Mammary epithelial cell (primary cell): ENCODE measurements at regions of chr14 and their contacts with region 1.

Region 1: GRCh38 chr14:68039593-68039992 is 220.0 kb downstream of the RAD51B start:
- DNase-seq: peak; percentile 50
- H3K4me3 ChIP-seq: no peak overlapping the region
- H3K27ac ChIP-seq: no peak overlapping the region
- H3K4me1 ChIP-seq: peaks cover 9% of the 10 kb centered on the region
- H3K27me3 ChIP-seq: no peaks in the 10 kb centered on the region
- CTCF ChIP-seq: no peak

Region 2: DNA sequence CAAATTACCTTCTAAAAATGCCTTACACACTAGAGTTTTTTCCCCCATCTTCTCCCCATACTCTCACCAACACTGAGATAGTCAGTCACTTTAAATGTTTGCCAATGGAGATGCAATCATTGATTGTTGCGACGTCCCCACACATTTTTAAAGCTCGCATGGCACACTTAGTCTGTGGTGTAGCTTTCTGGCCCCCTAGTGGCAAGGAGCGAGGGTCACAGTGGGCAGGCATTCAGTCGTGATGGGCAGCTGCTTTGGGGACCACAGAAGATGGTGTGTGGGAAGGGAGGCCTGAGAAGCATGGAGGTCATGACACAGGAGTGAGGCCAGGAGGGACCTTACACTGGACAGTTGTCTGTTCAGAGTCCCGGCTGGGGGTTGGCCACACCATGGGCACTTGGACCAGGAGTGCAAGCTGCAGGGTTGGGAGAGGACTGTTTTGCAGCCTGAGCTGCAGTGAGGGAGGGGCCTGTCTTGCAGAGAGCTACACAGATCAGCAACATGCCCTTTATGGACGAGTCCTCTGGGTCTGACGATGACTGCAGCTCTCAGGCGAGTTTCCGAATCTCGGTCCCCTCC is 468.2 kb before region 1 on chr14:
- CTCF ChIA-PET with region 1: no interaction called
- dilution Hi-C with region 1: no loop called
- in situ Hi-C with region 1: no loop called
- intact Hi-C with region 1: no loop called
- DNase-seq: peak; percentile 37
- H3K4me3 ChIP-seq: no peak overlapping the region
- H3K27ac ChIP-seq: no peak overlapping the region
- H3K4me1 ChIP-seq: no peaks in the 10 kb centered on the region
- H3K27me3 ChIP-seq: no peaks in the 10 kb centered on the region
- CTCF ChIP-seq: peak; percentile 94 to 97

Region 3: DNA sequence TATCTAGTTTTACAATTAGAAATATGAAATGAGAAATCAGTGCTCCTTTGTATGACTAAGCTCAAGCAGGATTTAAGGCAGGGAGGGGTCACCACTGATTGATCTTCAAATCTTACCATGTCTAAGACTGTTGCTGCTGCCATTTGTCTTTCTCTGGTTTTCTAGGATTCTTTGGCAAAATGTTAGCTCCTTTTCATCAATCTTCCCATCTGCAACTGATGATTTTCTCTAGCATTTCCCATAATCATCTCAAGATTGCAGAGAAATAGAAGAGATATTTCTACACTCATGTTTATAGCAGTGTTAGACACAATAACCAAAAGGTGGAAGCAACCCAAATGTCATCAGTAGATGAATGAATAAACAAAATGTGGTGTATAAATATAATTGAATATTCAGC is 45.1 kb before region 1 on chr14:
- CTCF ChIA-PET with region 1: no interaction called
- dilution Hi-C with region 1: no loop called
- in situ Hi-C with region 1: no loop called
- intact Hi-C with region 1: loop called (anchors 5 kb)
- DNase-seq: no peak
- H3K4me3 ChIP-seq: no peak overlapping the region
- H3K27ac ChIP-seq: no peak overlapping the region
- H3K4me1 ChIP-seq: peaks cover 7% of the 10 kb centered on the region
- H3K27me3 ChIP-seq: peaks cover 1% of the 10 kb centered on the region
- CTCF ChIP-seq: no peak

Region 4: GRCh38 chr14:68458840-68459469 is 419.4 kb after region 1 on chr14:
- CTCF ChIA-PET with region 1: no interaction called
- dilution Hi-C with region 1: no loop called
- in situ Hi-C with region 1: no loop called
- intact Hi-C with region 1: no loop called
- DNase-seq: peak; percentile 90
- H3K4me3 ChIP-seq: no peak overlapping the region
- H3K27ac ChIP-seq: peak overlapping the region; percentile 66
- H3K4me1 ChIP-seq: peaks cover 34% of the 10 kb centered on the region
- H3K27me3 ChIP-seq: no peaks in the 10 kb centered on the region
- CTCF ChIP-seq: no peak